ENCODE measurements at regions of chr1 and their contacts with region 1.

Region 1: GRCh38 chr1:84772428-84772943 is 82.2 kb upstream of the SSX2IP start:
- DNase-seq: peak; percentile 83
- H3K4me3 Mint-ChIP-seq: no peak overlapping the region
- H3K27ac Mint-ChIP-seq: no peak overlapping the region
- H3K4me1 Mint-ChIP-seq: no peaks in the 10 kb centered on the region
- H3K27me3 Mint-ChIP-seq: no peaks in the 10 kb centered on the region

Region 2: DNA sequence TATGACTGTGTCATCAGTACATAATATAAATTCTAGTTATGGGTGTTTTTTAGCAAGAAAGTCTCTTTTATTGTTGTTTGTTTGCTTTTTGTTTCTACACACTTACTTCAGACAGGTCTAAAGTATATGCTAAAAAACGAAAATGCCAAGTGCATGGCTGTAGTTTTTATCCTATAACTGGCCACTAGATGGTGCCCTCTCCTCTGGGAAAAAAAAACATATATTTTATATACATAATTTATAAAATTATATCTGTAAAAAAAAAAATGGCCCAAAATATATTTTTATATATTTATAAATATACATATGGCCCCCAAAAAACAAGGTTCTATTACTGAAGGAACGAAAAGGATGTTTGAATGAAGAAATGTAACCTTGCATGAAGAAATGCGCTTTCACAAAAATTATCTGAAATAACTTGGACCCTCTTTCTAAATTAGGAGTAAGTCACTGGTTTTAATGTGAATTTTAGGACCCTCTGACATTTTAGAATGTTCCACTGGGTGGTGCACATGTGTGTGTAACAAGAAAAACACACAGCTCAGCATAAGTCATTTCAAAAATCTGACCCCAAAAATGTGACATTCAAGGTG is 867.1 kb before region 1 on chr1:
- CTCF ChIA-PET with region 1: interaction called, 4 read pairs
- POLR2A ChIA-PET with region 1: no interaction called
- intact Hi-C with region 1: loop called (anchors 5 kb)
- DNase-seq: no peak
- H3K4me3 Mint-ChIP-seq: no peak overlapping the region
- H3K27ac Mint-ChIP-seq: no peak overlapping the region
- H3K4me1 Mint-ChIP-seq: no peaks in the 10 kb centered on the region
- H3K27me3 Mint-ChIP-seq: peaks cover 13% of the 10 kb centered on the region

Region 3: DNA sequence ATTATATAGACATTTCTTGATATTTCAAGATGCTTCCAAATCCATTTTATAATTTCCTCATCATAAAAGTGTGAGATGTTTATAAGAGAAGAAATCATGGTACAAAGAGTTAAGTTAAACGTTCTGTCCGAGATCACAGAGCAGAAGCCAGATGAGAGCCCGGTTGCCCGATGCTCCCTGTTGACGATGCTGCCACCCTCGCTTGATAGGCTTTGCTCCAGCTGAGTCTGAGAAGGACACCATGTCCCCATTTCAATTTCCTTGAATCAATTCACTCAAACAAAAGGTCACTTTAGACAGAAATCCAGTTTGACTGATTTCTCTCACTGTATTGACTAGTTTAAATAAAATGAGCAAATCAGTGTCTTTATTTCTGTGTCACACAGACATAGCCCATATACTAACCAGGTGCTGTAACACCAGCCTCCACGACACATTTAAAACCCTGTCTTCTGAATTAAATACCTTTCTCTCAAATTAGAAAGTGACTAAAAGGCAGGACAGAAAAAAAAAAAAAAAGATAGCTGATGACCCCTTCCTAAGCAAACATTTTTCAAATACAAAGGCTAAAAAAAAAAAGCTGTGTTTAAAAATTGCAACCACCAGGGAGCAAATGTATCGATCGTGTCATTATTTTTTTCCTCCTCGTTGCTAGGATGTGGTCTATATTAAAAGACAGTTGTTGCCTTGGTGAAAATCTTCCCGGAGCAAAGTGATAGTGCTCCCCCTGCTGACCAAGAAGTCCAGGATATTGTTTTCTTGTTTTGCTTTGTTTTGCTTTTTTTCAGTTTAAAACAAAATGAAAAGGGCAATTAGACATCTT is 339.0 kb before region 1 on chr1:
- CTCF ChIA-PET with region 1: interaction called, 17 read pairs
- POLR2A ChIA-PET with region 1: no interaction called
- intact Hi-C with region 1: no loop called
- DNase-seq: peak; percentile 63
- H3K4me3 Mint-ChIP-seq: peak overlapping the region; percentile 48
- H3K27ac Mint-ChIP-seq: peak overlapping the region; percentile 11
- H3K4me1 Mint-ChIP-seq: peaks cover 13% of the 10 kb centered on the region
- H3K27me3 Mint-ChIP-seq: no peaks in the 10 kb centered on the region

Region 4: DNA sequence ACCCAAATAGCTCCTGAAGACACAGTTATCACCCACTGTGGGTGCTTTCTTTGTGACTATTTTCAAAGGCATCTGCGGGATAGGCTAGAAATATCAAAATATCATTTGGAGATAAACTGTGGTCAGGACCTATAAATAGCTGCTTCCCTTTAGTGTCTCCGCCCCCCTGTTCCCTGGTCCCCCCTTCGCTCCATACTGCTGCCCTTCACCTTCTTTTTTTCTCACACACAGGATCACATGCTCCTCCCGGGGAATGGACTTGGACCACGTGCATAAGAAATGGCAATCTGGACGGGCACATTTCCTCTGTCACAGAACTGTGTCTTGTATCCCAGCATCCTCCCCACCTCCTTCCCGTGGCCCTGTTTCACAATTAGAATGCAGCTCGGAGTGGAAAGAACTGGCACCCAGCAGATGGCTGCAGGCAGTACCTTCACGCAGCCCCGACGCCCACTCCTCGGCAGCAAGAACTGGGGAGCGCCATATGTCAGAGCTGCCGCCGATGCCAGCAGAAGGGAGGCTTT is 13.5 kb before region 1 on chr1:
- CTCF ChIA-PET with region 1: interaction called, 26 read pairs
- POLR2A ChIA-PET with region 1: interaction called, 3 read pairs
- intact Hi-C with region 1: no loop called
- DNase-seq: peak; percentile 34
- H3K4me3 Mint-ChIP-seq: peak overlapping the region; percentile 9
- H3K27ac Mint-ChIP-seq: no peak overlapping the region
- H3K4me1 Mint-ChIP-seq: peaks cover 7% of the 10 kb centered on the region
- H3K27me3 Mint-ChIP-seq: peaks cover 8% of the 10 kb centered on the region

Region 5: DNA sequence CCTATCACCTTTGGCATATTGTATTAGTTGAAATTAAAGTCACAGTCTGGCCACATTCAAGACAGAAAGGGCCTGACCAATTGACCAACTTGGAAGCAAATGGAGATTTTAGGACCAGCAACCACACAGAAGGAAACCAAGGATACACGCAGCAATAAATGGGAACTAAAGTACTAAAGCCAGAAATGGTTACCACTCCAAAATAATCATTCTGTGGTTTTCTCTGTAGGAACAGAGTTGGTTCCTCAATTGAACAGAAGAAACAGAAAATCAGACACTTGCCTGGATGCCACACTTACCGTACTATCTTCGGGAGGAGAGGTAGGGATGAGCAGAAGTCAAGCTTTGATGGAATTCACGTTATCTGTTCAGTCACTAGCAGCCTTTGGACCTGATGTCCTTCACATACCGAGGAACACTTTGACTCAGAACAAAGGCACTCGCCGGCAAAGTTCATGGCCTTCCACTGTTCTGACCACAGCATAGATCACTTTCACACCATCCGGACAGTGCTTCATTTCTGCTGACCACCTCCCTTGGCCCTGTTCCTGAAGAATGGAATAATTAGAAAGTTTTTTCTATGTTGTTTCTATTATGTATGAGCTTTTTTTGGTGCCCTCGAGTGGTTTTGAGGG is 23.6 kb after region 1 on chr1:
- CTCF ChIA-PET with region 1: interaction called, 10 read pairs
- POLR2A ChIA-PET with region 1: no interaction called
- intact Hi-C with region 1: no loop called
- DNase-seq: no peak
- H3K4me3 Mint-ChIP-seq: no peak overlapping the region
- H3K27ac Mint-ChIP-seq: no peak overlapping the region
- H3K4me1 Mint-ChIP-seq: no peaks in the 10 kb centered on the region
- H3K27me3 Mint-ChIP-seq: no peaks in the 10 kb centered on the region

Region 6: DNA sequence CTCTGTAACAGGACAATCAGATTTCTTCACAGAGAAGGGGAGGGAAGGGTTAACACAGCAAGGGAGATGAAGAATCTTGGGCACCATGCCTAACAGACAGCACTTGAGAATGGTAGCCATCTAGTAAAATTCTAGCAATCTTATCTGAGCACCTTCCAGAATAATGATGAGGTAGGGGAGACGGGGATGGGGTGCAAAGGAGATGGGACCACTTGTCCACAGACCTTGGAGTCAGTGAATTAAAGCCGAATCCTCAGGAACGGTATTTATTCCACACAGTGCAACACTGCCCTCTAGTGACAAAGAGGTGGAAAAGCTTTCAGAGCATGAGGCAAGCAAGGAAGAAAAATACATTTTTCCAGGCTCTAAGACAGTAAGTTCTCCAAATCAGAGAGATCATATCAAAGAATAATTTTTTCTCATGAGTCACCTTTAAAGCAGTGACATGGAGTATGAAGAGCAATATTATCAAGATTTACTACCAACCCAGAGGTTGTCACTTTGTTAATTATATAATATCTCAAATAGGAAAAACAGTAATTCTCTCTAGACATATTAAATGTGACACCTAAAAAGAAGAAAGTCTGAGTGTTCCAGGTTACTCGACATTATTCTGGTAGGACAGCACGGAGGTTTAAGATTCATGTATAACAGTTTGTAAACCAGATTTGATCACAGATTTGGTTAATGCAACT is 163.8 kb after region 1 on chr1:
- CTCF ChIA-PET with region 1: interaction called, 19 read pairs
- POLR2A ChIA-PET with region 1: no interaction called
- intact Hi-C with region 1: loop called (anchors 2 kb)
- DNase-seq: peak; percentile 27
- H3K4me3 Mint-ChIP-seq: no peak overlapping the region
- H3K27ac Mint-ChIP-seq: no peak overlapping the region
- H3K4me1 Mint-ChIP-seq: peaks cover 4% of the 10 kb centered on the region
- H3K27me3 Mint-ChIP-seq: no peaks in the 10 kb centered on the region

Region 7: DNA sequence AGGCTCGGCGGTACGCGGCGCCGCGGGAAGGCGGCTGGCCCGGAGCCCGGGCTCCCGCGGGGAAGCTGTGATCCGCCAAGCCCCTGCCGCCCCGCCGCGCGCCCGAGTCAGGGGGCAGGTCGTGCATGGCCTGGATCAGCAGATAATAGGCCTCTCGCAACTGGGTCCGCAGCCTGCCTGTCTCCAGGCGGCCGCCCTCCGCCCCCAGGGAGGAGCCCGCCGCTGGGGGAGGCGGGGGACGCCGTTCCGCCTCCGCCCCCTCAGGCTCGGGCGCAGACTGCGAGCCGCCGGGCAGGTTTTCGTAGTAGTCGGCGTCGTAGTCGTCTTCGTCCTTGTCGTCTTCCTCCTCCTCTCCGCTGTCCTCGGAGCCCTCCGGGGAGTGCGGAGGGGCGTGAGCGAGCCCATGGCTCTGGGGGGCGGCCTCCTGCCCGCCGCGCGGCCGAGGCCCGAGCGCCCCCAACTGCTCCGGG is 428.4 kb after region 1 on chr1 and contains the start of gene SYDE2:
- CTCF ChIA-PET with region 1: no interaction called
- POLR2A ChIA-PET with region 1: no interaction called
- intact Hi-C with region 1: no loop called
- DNase-seq: peak; percentile 76
- H3K4me3 Mint-ChIP-seq: peak within 1 kb of the TSS; percentile 97
- H3K27ac Mint-ChIP-seq: peak within 1 kb of the TSS; percentile 89
- H3K4me1 Mint-ChIP-seq: peaks cover 26% of the 10 kb centered on the region
- H3K27me3 Mint-ChIP-seq: peaks cover 5% of the 10 kb centered on the region
- total RNA-seq, gene SYDE2: 2.7 to 2.8 TPM